ENCODE measurements at regions of chr21 and their contacts with region 1.

Region 1: GRCh38 chr21:32278518-32279376 is at the start of gene MIS18A:
- DNase-seq: peak; percentile 95
- H3K4me3 Mint-ChIP-seq: peak within 1 kb of the TSS; percentile 99
- H3K27ac Mint-ChIP-seq: peak within 1 kb of the TSS; percentile 97
- H3K4me1 Mint-ChIP-seq: peaks cover 27% of the 10 kb centered on the region
- H3K27me3 Mint-ChIP-seq: no peaks in the 10 kb centered on the region
- total RNA-seq, gene MIS18A: 25.0 and 26.3 TPM in 2 replicates

Region 2: DNA sequence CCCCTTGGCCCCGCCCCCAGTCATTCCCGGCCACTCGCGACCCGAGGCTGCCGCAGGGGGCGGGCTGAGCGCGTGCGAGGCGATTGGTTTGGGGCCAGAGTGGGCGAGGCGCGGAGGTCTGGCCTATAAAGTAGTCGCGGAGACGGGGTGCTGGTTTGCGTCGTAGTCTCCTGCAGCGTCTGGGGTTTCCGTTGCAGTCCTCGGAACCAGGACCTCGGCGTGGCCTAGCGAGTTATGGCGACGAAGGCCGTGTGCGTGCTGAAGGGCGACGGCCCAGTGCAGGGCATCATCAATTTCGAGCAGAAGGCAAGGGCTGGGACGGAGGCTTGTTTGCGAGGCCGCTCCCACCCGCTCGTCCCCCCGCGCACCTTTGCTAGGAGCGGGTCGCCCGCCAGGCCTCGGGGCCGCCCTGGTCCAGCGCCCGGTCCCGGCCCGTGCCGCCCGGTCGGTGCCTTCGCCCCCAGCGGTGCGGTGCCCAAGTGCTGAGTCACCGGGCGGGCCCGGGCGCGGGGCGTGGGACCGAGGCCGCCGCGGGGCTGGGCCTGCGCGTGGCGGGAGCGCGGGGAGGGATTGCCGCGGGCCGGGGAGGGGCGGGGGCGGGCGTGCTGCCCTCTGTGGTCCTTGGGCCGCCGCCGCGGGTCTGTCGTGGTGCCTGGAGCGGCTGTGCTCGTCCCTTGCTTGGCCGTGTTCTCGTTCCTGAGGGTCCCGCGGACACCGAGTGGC is 619.0 kb before region 1 on chr21 and contains the start of gene SOD1:
- intact Hi-C with region 1: loop called (anchors 10 kb)
- DNase-seq: peak; percentile 96
- H3K4me3 Mint-ChIP-seq: peak within 1 kb of the TSS; percentile 99
- H3K27ac Mint-ChIP-seq: peak within 1 kb of the TSS; percentile 98
- H3K4me1 Mint-ChIP-seq: peaks cover 47% of the 10 kb centered on the region
- H3K27me3 Mint-ChIP-seq: no peaks in the 10 kb centered on the region
- total RNA-seq, gene SOD1: 284 and 286 TPM in 2 replicates